MCF 10A (cell line): ENCODE measurements at regions of chr6 and their contacts with region 1.

Region 1: GRCh38 chr6:149545754-149546528 is at the start of gene PPIL4:
- DNase-seq: peak; percentile 92
- H3K4me3 Mint-ChIP-seq: peak within 1 kb of the TSS; percentile 92
- H3K27ac Mint-ChIP-seq: peak within 1 kb of the TSS; percentile 90
- H3K4me1 Mint-ChIP-seq: peaks cover 34% of the 10 kb centered on the region
- H3K27me3 Mint-ChIP-seq: no peaks in the 10 kb centered on the region
- CTCF ChIP-seq: peak; percentile 88
- total RNA-seq, gene PPIL4: 37.2 and 47.7 TPM in 2 replicates

Region 2: DNA sequence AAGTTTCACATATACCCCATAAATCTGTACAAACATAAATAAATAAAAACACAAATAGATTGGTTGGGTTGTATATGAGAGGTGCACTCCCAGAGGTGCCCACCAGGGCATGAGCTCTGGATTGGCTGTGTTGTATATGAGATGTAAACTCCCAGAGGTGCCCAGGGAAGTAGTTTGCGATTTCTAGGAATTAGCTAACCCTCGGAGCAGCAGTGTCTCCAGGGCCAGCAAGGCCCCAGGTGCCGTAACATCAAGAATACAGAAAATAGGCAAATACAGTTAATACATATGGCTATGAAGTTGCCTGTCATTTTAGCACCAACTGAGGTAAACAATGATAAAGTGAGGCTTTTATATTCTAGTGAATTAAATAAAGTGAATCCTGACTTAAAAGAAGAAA is 14.8 kb after region 1 on chr6:
- CTCF ChIA-PET with region 1: interaction called, 26 read pairs
- POLR2A ChIA-PET with region 1: interaction called, 121 read pairs
- intact Hi-C with region 1: loop called (anchors 1 kb)
- DNase-seq: peak; percentile 27
- H3K4me3 Mint-ChIP-seq: no peak overlapping the region
- H3K27ac Mint-ChIP-seq: no peak overlapping the region
- H3K4me1 Mint-ChIP-seq: peaks cover 7% of the 10 kb centered on the region
- H3K27me3 Mint-ChIP-seq: peaks cover 37% of the 10 kb centered on the region
- CTCF ChIP-seq: peak; percentile 39

Region 3: DNA sequence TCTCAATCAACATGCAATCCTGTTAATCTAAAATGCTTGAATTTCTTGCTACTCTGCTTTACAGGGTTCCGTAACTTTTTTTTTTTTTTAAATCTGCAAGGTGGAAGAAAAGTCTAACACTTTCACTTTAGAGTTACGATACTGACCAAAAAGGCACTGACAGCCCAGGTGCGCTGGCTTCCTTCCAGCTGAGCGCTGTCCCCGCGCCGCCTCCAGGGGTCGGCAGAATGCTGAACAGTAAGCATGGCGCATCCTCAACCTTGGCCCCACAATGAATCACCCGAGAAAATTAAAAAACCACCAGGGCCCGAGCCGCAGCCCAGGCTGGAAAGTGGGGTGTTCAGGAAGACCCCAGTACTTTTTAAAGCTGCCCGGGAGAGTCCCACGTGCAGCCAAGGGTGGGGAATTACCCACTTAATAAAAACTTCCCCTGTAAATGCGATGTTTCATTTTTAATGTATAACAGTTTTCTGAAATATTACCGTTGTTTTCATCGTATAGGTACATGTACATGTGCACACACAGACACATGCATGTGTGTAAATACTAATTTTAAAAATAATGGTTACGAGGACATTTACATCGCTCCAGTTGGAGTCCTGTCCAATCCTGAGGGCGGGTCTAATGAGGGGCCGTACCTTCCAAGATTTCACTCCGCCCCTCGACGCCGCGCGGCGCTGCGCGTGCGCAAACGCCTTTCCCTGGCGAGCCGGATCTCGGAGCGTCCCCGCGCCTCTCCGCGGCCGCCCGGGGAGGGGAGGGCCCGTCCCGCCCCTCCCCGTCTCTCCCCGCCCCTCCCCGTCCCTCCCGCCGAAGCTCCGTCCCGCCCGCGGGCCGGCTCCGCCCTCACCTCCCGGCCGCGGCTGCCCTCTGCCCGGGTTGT is 19.8 kb after region 1 on chr6 and contains the start of gene GINM1:
- CTCF ChIA-PET with region 1: interaction called, 26 read pairs
- POLR2A ChIA-PET with region 1: interaction called, 121 read pairs
- intact Hi-C with region 1: loop called (anchors 1 kb)
- DNase-seq: peak; percentile 95
- H3K4me3 Mint-ChIP-seq: peak within 1 kb of the TSS; percentile 87
- H3K27ac Mint-ChIP-seq: peak within 1 kb of the TSS; percentile 61
- H3K4me1 Mint-ChIP-seq: peaks cover 7% of the 10 kb centered on the region
- H3K27me3 Mint-ChIP-seq: no peaks in the 10 kb centered on the region
- CTCF ChIP-seq: peak; percentile 61
- total RNA-seq, gene GINM1: 27.7 and 29.6 TPM in 2 replicates

Region 4: DNA sequence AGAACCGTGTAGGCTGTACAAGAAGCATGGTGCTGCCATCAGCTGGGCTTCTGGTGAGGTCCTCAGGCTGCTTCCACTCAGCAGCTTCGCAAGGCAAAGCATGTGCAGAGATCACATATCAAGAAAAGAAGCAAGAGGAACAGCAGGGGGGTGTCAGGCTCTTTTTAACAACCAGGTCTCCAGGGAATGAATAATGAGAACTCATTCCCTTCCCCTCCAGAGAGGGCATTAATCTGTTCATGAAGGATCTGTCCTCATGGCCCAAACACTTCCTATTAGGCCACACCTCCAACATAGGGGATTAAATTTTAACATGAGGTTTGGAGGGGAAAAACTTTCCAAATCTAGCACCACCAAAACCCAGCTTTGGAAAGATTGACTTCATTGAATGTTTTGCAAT is 40.2 kb after region 1 on chr6:
- CTCF ChIA-PET with region 1: no interaction called
- POLR2A ChIA-PET with region 1: no interaction called
- intact Hi-C with region 1: no loop called
- DNase-seq: no peak
- H3K4me3 Mint-ChIP-seq: no peak overlapping the region
- H3K27ac Mint-ChIP-seq: no peak overlapping the region
- H3K4me1 Mint-ChIP-seq: no peaks in the 10 kb centered on the region
- H3K27me3 Mint-ChIP-seq: no peaks in the 10 kb centered on the region
- CTCF ChIP-seq: no peak

Region 5: GRCh38 chr6:149648148-149649145 is 102.5 kb after region 1 on chr6 and contains the start of gene KATNA1:
- CTCF ChIA-PET with region 1: interaction called, 4 read pairs
- POLR2A ChIA-PET with region 1: interaction called, 31 read pairs
- intact Hi-C with region 1: loop called (anchors 5 kb)
- DNase-seq: peak; percentile 93
- H3K4me3 Mint-ChIP-seq: peak within 1 kb of the TSS; percentile 85
- H3K27ac Mint-ChIP-seq: peak within 1 kb of the TSS; percentile 82
- H3K4me1 Mint-ChIP-seq: peaks cover 6% of the 10 kb centered on the region
- H3K27me3 Mint-ChIP-seq: no peaks in the 10 kb centered on the region
- CTCF ChIP-seq: no peak
- total RNA-seq, gene KATNA1: 23.2 and 25.8 TPM in 2 replicates